Pancreas (tissue), 10 donors: ENCODE measurements at regions of chr6 and their contacts with region 1.

Region 1: DNA sequence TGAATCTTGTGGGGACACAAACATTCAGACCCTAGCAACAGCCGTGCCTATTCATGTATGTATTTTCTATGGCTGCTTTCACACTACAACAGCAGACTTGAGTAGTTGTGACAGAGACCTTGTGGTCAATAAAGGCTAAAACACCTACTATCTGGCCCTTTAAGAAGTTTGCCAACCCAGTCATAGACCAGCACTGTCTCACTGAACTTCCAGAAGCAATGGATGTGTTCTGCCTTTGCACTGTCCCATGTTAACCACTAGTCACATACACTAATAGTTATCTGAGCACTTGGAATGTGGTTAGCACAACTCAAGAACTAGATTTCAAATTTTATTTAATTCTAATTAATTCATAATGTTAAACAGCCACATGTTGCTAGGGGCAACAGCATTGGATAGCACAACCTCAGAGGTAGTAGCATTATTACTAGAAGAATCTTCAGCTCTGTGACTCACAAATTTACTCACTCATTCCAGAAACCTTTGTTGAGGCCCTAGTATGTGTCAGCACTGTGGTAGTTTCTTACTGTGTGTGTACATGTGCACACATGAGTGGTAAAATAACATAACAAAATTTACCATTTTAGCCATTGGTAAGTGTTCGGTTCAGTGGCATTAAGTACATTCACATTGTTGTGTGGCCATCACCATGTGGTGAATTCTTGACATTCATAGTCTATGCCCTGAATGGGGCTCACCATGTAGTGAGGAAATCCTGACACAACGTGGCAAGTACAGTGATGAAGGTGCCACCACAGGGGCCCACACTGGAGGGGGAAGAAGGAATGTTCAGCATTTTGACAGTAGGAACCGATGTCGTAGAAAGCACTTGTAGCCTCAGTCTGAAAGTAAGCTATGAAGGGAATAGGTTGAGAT is 107.3 kb downstream of the CEP57L1 start:
- DNase-seq: no peak
- ATAC-seq: no peak
- H3K4me3 ChIP-seq: no peak overlapping the region
- H3K27ac ChIP-seq: no peak overlapping the region
- H3K4me1 ChIP-seq: peaks cover 0 to 2% (median 1%) of the 10 kb centered on the region in 3 donors
- H3K27me3 ChIP-seq: no peaks in the 10 kb centered on the region
- CTCF ChIP-seq: no peak

Region 2: DNA sequence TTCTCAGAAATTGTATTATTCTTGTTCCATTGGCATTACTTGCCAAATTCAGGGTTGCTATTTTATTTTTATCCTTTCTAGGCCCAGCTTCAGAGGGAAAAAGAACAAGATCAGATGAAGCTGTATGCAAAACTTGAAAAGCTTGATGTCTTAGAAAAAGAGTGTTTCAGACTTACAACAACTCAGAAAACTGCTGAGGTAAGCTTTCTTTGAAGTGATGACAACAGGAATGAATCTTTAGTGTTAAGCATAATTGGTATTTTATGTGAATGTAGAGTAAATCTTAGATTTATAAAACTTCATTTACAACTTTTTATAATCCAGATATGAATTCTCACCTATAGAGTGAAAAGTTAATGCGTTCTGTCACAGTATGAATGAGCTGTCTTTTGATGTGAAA is 48.9 kb before region 1 on chr6:
- intact Hi-C with region 1: no loop called
- DNase-seq: no peak
- ATAC-seq: no peak
- H3K4me3 ChIP-seq: no peak overlapping the region
- H3K27ac ChIP-seq: no peak overlapping the region
- H3K4me1 ChIP-seq: no peaks in the 10 kb centered on the region
- H3K27me3 ChIP-seq: no peaks in the 10 kb centered on the region
- CTCF ChIP-seq: no peak

Region 3: GRCh38 chr6:109236115-109237076 is 33.7 kb after region 1 on chr6:
- intact Hi-C with region 1: no loop called
- DNase-seq: peak; percentile 44 to 71 (median 58)
- ATAC-seq: peak; percentile 86 to 97 (median 90)
- H3K4me3 ChIP-seq: no peak overlapping the region
- H3K27ac ChIP-seq: no peak overlapping the region
- H3K4me1 ChIP-seq: no peaks in the 10 kb centered on the region
- H3K27me3 ChIP-seq: no peaks in the 10 kb centered on the region
- CTCF ChIP-seq: no peak

Region 4: DNA sequence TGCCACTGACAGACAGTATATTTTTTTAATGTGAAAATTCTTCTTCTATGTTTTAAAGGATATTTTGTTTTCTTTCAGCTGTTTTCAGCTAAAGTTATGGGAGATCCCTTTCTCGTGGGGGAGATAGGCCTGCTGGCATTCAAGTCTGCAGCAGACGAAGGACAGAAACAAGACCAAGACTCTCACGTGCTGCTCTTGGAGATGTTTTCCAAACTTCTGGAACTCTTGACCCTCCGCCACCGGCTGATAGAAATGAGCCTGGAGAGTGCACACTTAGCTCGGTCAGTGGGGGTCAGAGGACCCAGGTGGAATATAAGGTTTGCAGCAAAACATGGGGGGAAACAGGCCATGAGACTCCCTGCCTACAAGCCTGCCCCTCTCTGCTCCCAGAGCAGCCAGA is 59.2 kb after region 1 on chr6:
- intact Hi-C with region 1: no loop called
- DNase-seq: no peak
- ATAC-seq: no peak
- H3K4me3 ChIP-seq: no peak overlapping the region
- H3K27ac ChIP-seq: no peak overlapping the region
- H3K4me1 ChIP-seq: peaks cover 0 to 14% (median 0%) of the 10 kb centered on the region in 3 donors
- H3K27me3 ChIP-seq: no peaks in the 10 kb centered on the region
- CTCF ChIP-seq: no peak

Region 5: DNA sequence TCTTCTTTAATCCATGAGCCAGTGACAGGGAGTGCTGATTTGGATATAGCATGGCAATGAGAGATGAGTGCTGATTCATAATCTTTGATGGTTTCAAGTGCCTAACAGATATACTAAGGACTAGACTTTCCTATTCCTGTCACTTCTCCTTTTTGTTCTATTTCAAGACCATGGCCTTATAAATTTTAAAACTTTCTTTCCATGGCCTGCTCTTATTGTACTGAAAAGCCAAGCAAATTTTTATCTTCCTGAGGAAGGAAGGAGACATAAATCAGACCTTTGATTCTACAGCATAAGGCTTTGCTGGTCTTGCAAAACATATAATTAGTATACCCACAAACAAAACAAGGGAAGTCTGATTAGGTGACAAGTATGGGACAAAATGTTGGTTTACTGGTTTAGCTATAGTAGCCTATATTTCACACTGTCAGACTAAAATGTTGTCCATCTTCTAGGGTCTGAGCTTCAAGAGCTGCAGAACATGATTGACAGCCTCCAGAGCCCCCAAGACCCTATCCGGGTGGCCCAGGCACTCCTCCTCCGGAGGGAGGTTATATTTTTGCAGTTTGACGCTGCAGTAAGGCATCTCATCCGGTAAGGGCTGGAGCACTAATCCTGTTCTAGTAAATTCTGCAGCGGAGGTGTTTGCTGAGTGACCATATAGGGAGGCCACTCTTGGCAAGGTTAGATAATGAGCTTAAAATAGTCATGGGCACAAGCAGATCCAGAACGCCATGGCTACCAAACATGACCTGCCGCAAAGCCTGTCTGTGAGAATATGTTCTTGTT is 97.3 kb after region 1 on chr6:
- intact Hi-C with region 1: loop called in 1 of 3 experiments (anchors 10 kb)
- DNase-seq: peak in 3 of 6 donors; percentile 33 to 65 (median 51)
- ATAC-seq: peak; percentile 73 to 89 (median 80)
- H3K4me3 ChIP-seq: no peak overlapping the region
- H3K27ac ChIP-seq: no peak overlapping the region
- H3K4me1 ChIP-seq: peaks cover 7 to 38% (median 38%) of the 10 kb centered on the region in 3 donors
- H3K27me3 ChIP-seq: no peaks in the 10 kb centered on the region
- CTCF ChIP-seq: no peak

Region 6: GRCh38 chr6:109877028-109878006 is 674.7 kb after region 1 on chr6:
- intact Hi-C with region 1: no loop called
- DNase-seq: no peak
- ATAC-seq: no peak
- H3K4me3 ChIP-seq: no peak overlapping the region
- H3K27ac ChIP-seq: no peak overlapping the region
- H3K4me1 ChIP-seq: no peaks in the 10 kb centered on the region
- H3K27me3 ChIP-seq: no peaks in the 10 kb centered on the region
- CTCF ChIP-seq: no peak